T-cell (primary cell): ENCODE measurements at regions of chr19 and their contacts with region 1.

Region 1: DNA sequence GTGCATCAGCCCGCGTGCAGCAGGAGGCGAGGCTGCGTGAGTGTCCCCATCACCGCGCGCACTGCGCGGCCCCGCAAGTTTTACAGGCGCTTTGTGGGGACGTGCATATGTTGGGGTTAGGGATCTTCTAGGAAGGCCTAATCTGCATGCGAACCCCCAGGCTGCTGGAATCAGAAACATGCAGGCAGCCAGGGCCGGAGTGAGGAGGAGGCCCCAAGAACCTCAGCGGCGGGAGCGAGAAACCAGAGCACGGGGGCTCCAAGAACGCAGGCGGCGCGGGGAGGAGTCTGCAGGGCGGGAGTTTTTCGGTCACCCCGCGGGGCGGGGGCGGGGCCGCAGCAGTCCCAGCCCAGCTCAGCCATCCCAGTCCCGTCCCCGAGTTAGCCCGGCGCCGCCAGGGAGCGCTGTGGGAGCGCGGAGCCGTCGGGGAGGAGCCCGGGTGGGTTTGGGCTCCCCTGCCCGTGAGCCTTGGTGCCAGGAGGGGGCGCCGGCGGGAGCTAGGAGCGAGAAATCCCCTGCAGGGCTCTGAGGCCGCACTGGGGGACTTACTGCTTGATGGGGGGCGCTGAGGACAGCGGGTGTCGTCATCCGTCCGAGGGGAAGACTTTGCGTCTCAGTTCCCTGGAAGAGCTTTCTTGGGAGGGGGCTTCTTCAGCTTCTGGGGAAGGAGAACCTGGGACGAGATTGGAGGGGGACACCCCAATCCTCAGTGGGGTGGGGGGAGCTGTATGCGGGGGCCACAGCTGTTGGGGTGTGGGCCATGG is 933 bp upstream of the NRTN start:
- DNase-seq: peak; percentile 80 to 96 (median 88)
- ATAC-seq: peak; percentile 91 to 93 (median 92)
- H3K4me3 ChIP-seq: peak overlapping the region; percentile 40 to 56
- H3K4me3 Mint-ChIP-seq: peak overlapping the region; percentile 64 to 85 (median 71)
- H3K27ac ChIP-seq: no peak overlapping the region
- H3K27ac Mint-ChIP-seq: peak overlapping the region in 1 of 2 donors; percentile 44
- H3K4me1 ChIP-seq: peaks cover 7 to 35% of the 10 kb centered on the region in 2 experiments
- H3K4me1 Mint-ChIP-seq: peaks cover 18 to 28% (median 20%) of the 10 kb centered on the region in 3 donors
- H3K27me3 ChIP-seq: peaks cover 0 to 65% of the 10 kb centered on the region in 2 experiments
- H3K27me3 Mint-ChIP-seq: peaks cover 11 to 27% of the 10 kb centered on the region in 2 donors

Region 2: GRCh38 chr19:5790573-5791520 is 13.1 kb before region 1 on chr19 and contains the start of gene DUS3L:
- CTCF ChIA-PET with region 1: interaction called, 6 to 13 read pairs
- POLR2A ChIA-PET with region 1: no interaction called
- DNase-seq: peak; percentile 88 to 98 (median 96)
- ATAC-seq: peak; percentile 92 to 96 (median 95)
- H3K4me3 ChIP-seq: peak within 1 kb of the TSS; percentile 75 to 76
- H3K4me3 Mint-ChIP-seq: peak within 1 kb of the TSS; percentile 94 to 100 (median 100)
- H3K27ac ChIP-seq: peak within 1 kb of the TSS; percentile 96
- H3K27ac Mint-ChIP-seq: peak within 1 kb of the TSS; percentile 100
- H3K4me1 ChIP-seq: peaks cover 4 to 20% of the 10 kb centered on the region in 2 experiments
- H3K4me1 Mint-ChIP-seq: peaks cover 10 to 20% (median 17%) of the 10 kb centered on the region in 3 donors
- H3K27me3 ChIP-seq: peaks cover 0 to 16% of the 10 kb centered on the region in 2 experiments
- H3K27me3 Mint-ChIP-seq: peaks cover 0 to 3% of the 10 kb centered on the region in 2 donors
- total RNA-seq, gene DUS3L: 69.9 to 153 (median 98.3) TPM

Region 3: GRCh38 chr19:5814852-5815246 is 10.9 kb after region 1 on chr19:
- CTCF ChIA-PET with region 1: interaction called in 1 of 2 experiments, 4 read pairs
- POLR2A ChIA-PET with region 1: interaction called in 1 of 2 experiments, 11 read pairs
- DNase-seq: no peak
- ATAC-seq: no peak
- H3K4me3 ChIP-seq: no peak overlapping the region
- H3K4me3 Mint-ChIP-seq: no peak overlapping the region
- H3K27ac ChIP-seq: no peak overlapping the region
- H3K27ac Mint-ChIP-seq: no peak overlapping the region
- H3K4me1 ChIP-seq: no peaks in the 10 kb centered on the region
- H3K4me1 Mint-ChIP-seq: no peaks in the 10 kb centered on the region
- H3K27me3 ChIP-seq: peaks cover 0 to 15% of the 10 kb centered on the region in 2 experiments
- H3K27me3 Mint-ChIP-seq: peaks cover 1 to 8% of the 10 kb centered on the region in 2 donors

Region 4: GRCh38 chr19:5827891-5828660 is 24.1 kb after region 1 on chr19:
- CTCF ChIA-PET with region 1: interaction called, 4 to 17 read pairs
- POLR2A ChIA-PET with region 1: no interaction called
- DNase-seq: peak; percentile 80 to 97 (median 88)
- ATAC-seq: peak; percentile 77 to 84 (median 82)
- H3K4me3 ChIP-seq: peak overlapping the region; percentile 78 to 80
- H3K4me3 Mint-ChIP-seq: peak overlapping the region; percentile 96 to 99 (median 96)
- H3K27ac ChIP-seq: peak overlapping the region; percentile 80
- H3K27ac Mint-ChIP-seq: peak overlapping the region; percentile 93 to 100
- H3K4me1 ChIP-seq: peaks cover 6 to 29% of the 10 kb centered on the region in 2 experiments
- H3K4me1 Mint-ChIP-seq: peaks cover 14 to 17% (median 17%) of the 10 kb centered on the region in 3 donors
- H3K27me3 ChIP-seq: peaks cover 0 to 31% of the 10 kb centered on the region in 2 experiments
- H3K27me3 Mint-ChIP-seq: peaks cover 0 to 9% of the 10 kb centered on the region in 2 donors

Region 5: DNA sequence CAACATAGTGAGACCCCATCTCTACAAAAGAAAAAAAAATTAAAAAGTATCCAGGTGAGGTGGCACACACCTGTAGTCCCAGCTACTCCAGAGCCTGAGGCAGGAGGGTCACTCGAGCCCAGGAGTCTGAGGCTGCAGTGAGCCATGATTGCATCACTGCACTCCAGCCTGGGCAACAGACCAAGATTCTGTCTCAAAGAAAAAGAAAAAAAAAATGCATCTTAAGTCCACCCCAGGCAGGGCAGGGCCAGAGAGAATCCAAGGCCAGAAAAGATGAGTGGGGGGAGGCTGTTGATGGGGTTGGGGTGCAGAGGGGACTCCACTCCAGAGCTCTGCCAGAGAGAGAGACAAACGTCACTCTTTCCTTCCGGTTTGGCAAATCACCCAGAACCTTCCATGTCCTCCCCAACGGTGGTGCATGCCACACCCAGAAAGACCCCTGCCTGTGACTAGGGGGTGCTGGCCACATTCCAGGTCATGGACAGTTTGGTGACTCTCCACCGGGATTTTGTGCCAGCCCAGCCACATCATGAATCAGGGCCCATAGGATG is 46.9 kb after region 1 on chr19:
- CTCF ChIA-PET with region 1: no interaction called
- POLR2A ChIA-PET with region 1: no interaction called
- DNase-seq: no peak
- ATAC-seq: no peak
- H3K4me3 ChIP-seq: no peak overlapping the region
- H3K4me3 Mint-ChIP-seq: no peak overlapping the region
- H3K27ac ChIP-seq: no peak overlapping the region
- H3K27ac Mint-ChIP-seq: no peak overlapping the region
- H3K4me1 ChIP-seq: no peaks in the 10 kb centered on the region
- H3K4me1 Mint-ChIP-seq: peaks cover 0 to 3% (median 0%) of the 10 kb centered on the region in 3 donors
- H3K27me3 ChIP-seq: peaks cover 0 to 9% of the 10 kb centered on the region in 2 experiments
- H3K27me3 Mint-ChIP-seq: peaks cover 0 to 7% of the 10 kb centered on the region in 2 donors

Region 6: GRCh38 chr19:5904352-5905113 is 100.6 kb after region 1 on chr19 and contains the start of gene VMAC:
- CTCF ChIA-PET with region 1: interaction called in 1 of 2 experiments, 25 read pairs
- POLR2A ChIA-PET with region 1: no interaction called
- DNase-seq: peak; percentile 99 to 100 (median 100)
- ATAC-seq: peak; percentile 78 to 80 (median 80)
- H3K4me3 ChIP-seq: peak within 1 kb of the TSS; percentile 85 to 100
- H3K4me3 Mint-ChIP-seq: peak within 1 kb of the TSS; percentile 95 to 96 (median 95)
- H3K27ac ChIP-seq: peak within 1 kb of the TSS; percentile 85
- H3K27ac Mint-ChIP-seq: peak within 1 kb of the TSS; percentile 99 to 100
- H3K4me1 ChIP-seq: peaks cover 0 to 48% of the 10 kb centered on the region in 2 experiments
- H3K4me1 Mint-ChIP-seq: peaks cover 35 to 47% (median 37%) of the 10 kb centered on the region in 3 donors
- H3K27me3 ChIP-seq: no peaks in the 10 kb centered on the region
- H3K27me3 Mint-ChIP-seq: no peaks in the 10 kb centered on the region
- total RNA-seq, gene VMAC: 23.8 to 35.9 (median 30.9) TPM

Region 7: GRCh38 chr19:6021878-6022569 is 218.1 kb after region 1 on chr19:
- CTCF ChIA-PET with region 1: interaction called, 16 to 17 read pairs
- POLR2A ChIA-PET with region 1: no interaction called
- DNase-seq: peak; percentile 55 to 88 (median 74)
- ATAC-seq: peak; percentile 88 to 96 (median 93)
- H3K4me3 ChIP-seq: no peak overlapping the region
- H3K4me3 Mint-ChIP-seq: no peak overlapping the region
- H3K27ac ChIP-seq: no peak overlapping the region
- H3K27ac Mint-ChIP-seq: no peak overlapping the region
- H3K4me1 ChIP-seq: peaks cover 7 to 8% of the 10 kb centered on the region in 2 experiments
- H3K4me1 Mint-ChIP-seq: peaks cover 4 to 18% (median 4%) of the 10 kb centered on the region in 3 donors
- H3K27me3 ChIP-seq: peaks cover 0 to 26% of the 10 kb centered on the region in 2 experiments
- H3K27me3 Mint-ChIP-seq: peaks cover 0 to 8% of the 10 kb centered on the region in 2 donors